ENCODE measurements at regions of chr21 and their contacts with region 1.

Region 1: DNA sequence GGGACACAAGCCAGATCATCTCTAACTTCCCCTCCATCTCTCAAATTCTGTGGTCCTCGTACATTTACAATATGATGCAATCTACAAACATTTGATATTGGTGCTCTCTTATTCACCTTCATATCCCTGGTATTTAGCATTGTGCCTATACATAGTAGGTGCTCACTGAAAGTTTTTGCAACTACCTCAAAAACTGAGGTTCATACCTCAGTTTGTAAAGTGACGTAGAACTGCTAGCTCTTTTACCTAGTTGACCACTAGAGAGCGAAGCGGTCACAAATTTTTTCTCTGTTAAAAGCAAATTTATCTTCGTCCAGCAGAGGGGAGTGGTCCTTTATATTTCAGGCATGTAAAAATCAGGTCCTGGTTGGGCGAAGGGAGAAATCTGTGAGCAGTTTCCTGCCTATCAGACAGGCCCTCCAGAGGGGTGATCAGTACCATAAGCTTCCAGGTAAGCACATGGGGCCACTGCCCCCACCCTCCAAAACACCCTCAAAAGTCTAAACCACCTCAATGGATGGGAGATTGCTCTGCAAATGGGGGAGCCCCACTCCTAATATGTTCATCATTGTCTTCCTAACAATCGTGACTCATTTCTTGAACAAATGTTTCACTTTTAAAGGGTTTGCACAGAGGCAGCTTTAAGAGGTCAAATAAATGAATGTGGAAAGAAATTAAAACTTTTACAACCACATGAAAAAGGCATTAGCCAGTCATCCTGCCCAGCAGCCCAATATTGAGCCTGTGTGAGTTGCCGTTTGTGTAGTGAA is 10.6 kb upstream of the HLCS start:
- H3K4me3 ChIP-seq: no peak overlapping the region
- H3K27ac ChIP-seq: no peak overlapping the region
- H3K4me1 ChIP-seq: no peaks in the 10 kb centered on the region; the same call in none of the 2 replicates
- CTCF ChIP-seq: peak; percentile 88

Region 2: DNA sequence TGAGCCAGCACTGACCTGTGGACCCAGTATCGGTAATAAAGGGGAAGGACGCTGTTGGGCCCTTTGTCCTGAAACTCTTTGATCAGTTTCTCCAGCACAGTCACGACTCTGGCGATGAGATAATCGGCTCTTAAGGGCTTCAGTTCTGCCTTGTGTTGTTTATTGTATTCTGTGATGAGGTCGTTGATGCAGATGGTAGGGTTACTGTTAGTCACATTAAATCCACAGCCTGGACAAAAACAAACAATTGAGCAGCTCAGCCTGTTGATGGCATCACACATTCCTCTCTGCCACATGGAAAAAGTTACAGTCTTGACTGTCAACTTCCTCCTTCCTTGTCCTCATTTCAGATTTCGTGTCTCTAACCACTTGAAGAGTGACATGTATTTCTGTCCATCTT is 220.5 kb before region 1 on chr21:
- CTCF ChIA-PET with region 1: no interaction called
- POLR2A ChIA-PET with region 1: no interaction called
- H3K4me3 ChIP-seq: no peak overlapping the region
- H3K27ac ChIP-seq: no peak overlapping the region
- H3K4me1 ChIP-seq: peaks cover 11% of the 10 kb centered on the region
- CTCF ChIP-seq: no peak

Region 3: DNA sequence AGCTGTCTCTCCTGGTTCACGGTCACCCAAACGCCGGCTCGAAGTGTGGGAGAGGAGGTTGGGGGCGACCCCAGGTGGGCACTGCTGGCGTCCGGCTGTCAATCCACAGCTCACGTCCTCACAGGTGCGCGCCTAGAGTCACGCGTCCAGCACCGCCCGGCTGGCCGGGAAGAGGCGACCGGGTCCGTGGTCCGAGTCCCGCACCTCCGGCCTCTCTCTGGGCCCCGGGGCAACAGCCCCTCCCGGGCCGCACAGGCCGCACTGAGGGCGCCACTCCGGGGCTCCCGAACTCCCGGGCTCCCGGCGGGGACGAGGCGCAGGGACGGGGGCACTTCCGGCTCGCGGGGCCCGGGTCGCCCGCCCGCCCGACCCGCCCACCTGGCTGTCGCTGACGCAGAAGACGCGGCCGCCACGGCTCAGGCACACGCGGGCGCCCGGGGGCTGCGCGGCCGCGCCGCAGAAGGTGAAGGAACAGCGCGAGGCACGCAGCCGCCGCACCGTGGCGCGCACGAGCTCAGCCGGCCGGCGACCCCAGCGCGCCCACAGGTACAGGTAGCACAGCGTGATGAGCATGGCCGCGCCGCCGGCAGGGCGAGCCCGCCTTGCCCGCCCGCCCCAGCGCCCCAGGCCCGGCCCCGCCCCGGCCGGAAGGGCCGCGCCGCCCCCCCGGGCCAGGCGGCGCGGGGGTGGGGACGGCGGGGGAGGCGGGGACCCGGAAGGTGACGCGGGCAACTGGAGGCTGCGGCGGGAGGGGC is 10.8 kb before region 1 on chr21 and contains the start of gene HLCS:
- CTCF ChIA-PET with region 1: interaction called, 48 read pairs
- POLR2A ChIA-PET with region 1: interaction called, 7 read pairs
- H3K4me3 ChIP-seq: peak within 1 kb of the TSS; percentile 80
- H3K27ac ChIP-seq: peak within 1 kb of the TSS; percentile 84
- H3K4me1 ChIP-seq: peaks cover 8% of the 10 kb centered on the region; the same call in 1 of the 2 replicates
- CTCF ChIP-seq: peak; percentile 75

Region 4: GRCh38 chr21:36989699-36990507 is 12.8 kb after region 1 on chr21:
- CTCF ChIA-PET with region 1: interaction called, 36 read pairs
- POLR2A ChIA-PET with region 1: interaction called, 10 read pairs
- H3K4me3 ChIP-seq: peak overlapping the region; percentile 53
- H3K27ac ChIP-seq: peak overlapping the region; percentile 77
- H3K4me1 ChIP-seq: no peaks in the 10 kb centered on the region
- CTCF ChIP-seq: peak; percentile 90

Region 5: GRCh38 chr21:37009740-37010341 is 32.8 kb after region 1 on chr21:
- CTCF ChIA-PET with region 1: interaction called, 20 read pairs
- POLR2A ChIA-PET with region 1: interaction called, 4 read pairs
- H3K4me3 ChIP-seq: peak overlapping the region; percentile 28
- H3K27ac ChIP-seq: no peak overlapping the region
- H3K4me1 ChIP-seq: no peaks in the 10 kb centered on the region; the same call in 1 of the 2 replicates
- CTCF ChIP-seq: peak; percentile 97

Region 6: DNA sequence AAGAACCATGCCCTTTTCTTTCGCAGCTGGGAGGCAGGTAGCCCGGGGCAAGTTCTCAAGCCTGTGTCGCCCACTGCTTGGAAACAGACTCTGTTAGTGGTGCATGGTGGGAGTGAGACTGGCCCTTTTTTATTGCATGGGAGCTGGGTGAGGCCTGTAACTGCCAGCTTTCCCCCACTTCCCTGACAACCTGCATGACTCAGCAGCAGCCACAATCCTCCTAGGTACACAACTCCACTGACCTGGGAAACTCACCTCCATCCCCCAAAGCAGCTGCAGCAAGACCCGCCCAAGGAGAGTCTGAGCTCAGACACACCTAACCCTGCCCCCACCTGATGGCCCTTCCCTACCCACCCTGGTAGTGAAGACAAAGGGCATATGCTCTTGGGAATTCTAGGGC is 70.0 kb after region 1 on chr21:
- CTCF ChIA-PET with region 1: no interaction called
- POLR2A ChIA-PET with region 1: no interaction called
- H3K4me3 ChIP-seq: no peak overlapping the region
- H3K27ac ChIP-seq: no peak overlapping the region
- H3K4me1 ChIP-seq: no peaks in the 10 kb centered on the region
- CTCF ChIP-seq: no peak

Region 7: DNA sequence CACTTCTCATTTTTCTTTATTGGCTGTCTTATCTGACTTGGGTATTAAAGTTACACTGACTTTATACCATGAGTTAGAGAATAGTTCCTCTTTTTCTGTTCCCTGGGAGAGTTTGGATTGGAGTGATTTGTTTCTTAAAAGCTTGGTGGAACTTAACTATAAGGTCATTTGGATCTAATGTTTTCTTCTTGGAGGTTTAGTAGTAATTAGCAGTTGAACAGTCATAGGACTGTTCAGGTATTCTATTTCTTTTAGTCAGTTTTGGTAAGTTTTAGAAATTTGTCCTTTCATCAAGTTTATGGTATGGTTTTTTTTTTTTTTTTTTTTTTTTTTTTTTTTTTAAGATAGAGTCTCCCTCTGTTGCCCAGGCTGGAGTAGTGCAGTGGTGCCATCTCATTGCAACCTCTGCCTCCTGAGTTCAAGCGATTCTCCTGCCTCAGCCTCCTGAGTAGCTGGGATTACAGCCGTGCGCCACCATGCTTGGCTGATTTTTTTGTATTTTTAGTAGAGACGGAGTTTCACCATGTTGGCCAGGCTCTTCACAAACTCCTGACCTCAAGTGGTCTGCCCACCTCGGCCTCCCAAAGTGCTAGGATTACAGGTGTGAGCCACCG is 102.3 kb after region 1 on chr21:
- CTCF ChIA-PET with region 1: interaction called, 10 read pairs
- POLR2A ChIA-PET with region 1: no interaction called
- H3K4me3 ChIP-seq: no peak overlapping the region
- H3K27ac ChIP-seq: no peak overlapping the region
- H3K4me1 ChIP-seq: no peaks in the 10 kb centered on the region
- CTCF ChIP-seq: no peak

Region 8: DNA sequence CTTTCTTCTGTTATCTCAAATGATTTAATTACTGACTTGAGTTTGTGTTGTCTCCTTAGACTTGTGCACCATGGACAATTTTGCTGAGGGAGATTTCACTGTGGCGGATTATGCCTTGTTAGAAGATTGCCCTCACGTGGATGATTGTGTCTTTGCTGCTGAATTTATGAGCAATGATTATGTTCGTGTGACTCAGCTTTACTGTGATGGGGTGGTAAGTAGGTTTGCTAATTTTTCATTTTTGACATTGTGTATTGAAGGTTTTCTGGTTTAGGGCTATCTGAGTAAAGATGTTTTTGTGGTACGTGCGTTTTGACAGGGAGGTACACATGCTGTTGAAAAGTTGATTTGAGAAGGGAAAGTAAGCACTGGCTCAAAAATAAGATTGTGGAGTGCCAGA is 110.1 kb after region 1 on chr21:
- CTCF ChIA-PET with region 1: interaction called, 25 read pairs
- POLR2A ChIA-PET with region 1: no interaction called
- H3K4me3 ChIP-seq: no peak overlapping the region
- H3K27ac ChIP-seq: no peak overlapping the region
- H3K4me1 ChIP-seq: no peaks in the 10 kb centered on the region
- CTCF ChIP-seq: peak; percentile 70

Measured in HEK293 (cell line).